ENCODE measurements at regions of chr5 and their contacts with region 1.

Region 1: DNA sequence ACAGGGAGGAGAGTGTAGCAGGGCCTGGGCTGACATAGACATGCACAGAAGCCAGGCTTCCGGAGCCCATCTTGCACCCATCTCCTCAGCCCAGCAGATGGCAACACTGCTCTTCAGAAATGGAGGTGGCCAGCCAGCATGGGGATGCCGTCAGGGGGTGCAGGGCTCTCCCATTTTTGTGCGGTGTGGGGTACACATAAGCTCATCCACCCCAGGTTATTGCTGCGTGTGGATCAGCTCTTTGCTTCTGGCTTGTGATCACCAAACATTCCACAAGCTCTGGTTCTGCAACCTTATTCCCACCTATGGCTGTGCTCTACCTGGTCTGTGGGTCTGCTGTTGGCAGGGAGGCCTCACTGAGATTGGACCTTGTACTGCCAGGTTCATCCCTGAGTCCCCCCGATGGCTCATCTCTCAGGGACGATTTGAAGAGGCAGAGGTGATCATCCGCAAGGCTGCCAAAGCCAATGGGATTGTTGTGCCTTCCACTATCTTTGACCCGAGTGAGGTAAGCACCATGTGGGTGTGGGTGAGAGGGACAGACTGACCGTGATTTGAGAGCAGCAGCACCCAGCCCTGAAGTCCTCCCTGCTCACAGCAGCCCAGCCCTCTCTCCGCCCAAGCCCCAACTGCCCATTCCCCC is 17.3 kb downstream of the SLC22A5 start:
- DNase-seq: peak; percentile 44 to 62
- H3K4me3 ChIP-seq: no peak overlapping the region
- H3K27ac ChIP-seq: peak overlapping the region; percentile 97
- H3K4me1 ChIP-seq: peaks cover 52% of the 10 kb centered on the region
- H3K27me3 ChIP-seq: no peaks in the 10 kb centered on the region
- CTCF ChIP-seq: peak; percentile 81

Region 2: DNA sequence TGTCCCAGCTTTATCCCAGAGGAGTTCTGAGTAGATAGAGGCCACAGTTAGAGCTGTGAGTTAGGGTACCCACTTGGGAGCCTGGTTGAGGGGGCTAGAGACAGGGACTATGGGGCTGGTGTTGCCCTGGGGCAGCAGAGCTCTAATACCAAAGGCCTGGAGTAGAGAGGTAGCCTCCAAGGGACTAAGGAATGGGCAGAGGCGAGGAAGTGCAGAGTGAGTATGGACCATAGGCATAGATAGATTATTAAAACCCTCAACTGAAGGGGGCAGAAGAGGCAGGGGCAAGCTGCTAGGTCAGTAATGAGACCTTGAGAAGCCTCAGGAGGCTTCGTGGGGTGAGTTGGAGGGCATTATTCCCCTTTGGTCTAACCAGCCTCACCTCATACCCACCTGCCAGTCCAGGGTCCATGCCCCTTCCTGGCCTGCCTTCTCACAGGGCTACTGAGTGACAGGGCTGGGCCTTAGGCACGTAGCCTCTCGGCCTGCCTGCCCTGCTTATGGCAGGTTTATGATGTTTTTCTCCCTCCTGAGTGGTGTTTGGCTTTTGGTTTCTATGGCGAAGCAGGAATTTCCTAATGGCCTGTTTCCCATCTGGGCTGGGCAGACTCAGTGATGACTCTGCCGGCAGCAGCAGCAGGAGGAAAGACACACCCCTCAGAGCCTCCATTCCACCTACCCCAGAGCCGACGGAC is 121.3 kb before region 1 on chr5:
- CTCF ChIA-PET with region 1: no interaction called
- POLR2A ChIA-PET with region 1: no interaction called
- intact Hi-C with region 1: loop called (anchors 5 kb)
- DNase-seq: peak; percentile 87 to 91
- H3K4me3 ChIP-seq: no peak overlapping the region
- H3K27ac ChIP-seq: peak overlapping the region; percentile 58
- H3K4me1 ChIP-seq: peaks cover 47% of the 10 kb centered on the region
- H3K27me3 ChIP-seq: no peaks in the 10 kb centered on the region
- CTCF ChIP-seq: no peak; the same call in 1 of the 2 replicates

Region 3: DNA sequence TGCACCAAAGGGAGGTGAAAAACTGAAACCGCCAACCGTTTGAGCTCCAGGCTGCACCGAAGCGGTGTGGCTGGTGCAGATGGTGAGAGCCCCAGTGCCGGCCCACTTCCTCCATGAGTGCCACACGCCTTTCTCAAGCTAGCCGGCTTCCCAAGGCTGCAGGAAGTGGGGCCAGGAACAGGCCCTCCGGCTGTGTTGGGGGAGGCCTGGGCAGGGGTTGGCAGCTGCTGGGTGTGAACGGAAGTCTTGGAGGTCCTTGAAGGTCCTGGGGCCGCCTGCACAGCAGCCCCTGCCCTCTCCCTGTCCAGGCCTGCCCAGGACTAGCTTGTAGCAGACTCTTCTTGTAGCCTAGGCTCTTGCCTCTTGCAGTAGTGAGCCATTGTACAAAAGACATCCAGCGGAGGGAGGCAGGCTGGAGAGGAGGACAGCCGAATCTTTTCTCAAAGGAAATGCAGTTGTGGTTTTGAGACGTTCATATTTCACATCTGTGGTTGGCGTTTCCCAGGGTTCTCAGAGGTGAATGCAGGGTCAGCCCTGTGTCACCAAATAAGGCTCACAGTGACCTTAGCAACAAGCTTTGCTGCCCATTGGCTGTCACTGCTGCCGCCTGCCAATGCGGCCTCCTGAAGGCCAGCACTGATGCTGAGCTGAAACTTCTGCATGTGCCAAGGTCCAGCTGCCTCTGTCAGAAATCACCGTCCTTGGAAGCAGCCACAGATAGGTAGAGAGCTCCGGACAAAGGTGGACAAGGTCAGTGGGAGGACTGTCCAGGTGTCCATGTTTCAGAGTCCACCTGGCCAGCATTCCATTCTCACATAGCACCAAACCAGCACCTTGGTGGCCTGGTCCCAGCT is 79.9 kb after region 1 on chr5:
- CTCF ChIA-PET with region 1: interaction called, 3 read pairs
- POLR2A ChIA-PET with region 1: interaction called, 3 read pairs
- intact Hi-C with region 1: loop called (anchors 1 kb)
- DNase-seq: peak in 1 of 2 experiments; percentile 59
- H3K4me3 ChIP-seq: no peak overlapping the region
- H3K27ac ChIP-seq: no peak overlapping the region
- H3K4me1 ChIP-seq: peaks cover 29% of the 10 kb centered on the region
- H3K27me3 ChIP-seq: no peaks in the 10 kb centered on the region
- CTCF ChIP-seq: no peak

Region 4: DNA sequence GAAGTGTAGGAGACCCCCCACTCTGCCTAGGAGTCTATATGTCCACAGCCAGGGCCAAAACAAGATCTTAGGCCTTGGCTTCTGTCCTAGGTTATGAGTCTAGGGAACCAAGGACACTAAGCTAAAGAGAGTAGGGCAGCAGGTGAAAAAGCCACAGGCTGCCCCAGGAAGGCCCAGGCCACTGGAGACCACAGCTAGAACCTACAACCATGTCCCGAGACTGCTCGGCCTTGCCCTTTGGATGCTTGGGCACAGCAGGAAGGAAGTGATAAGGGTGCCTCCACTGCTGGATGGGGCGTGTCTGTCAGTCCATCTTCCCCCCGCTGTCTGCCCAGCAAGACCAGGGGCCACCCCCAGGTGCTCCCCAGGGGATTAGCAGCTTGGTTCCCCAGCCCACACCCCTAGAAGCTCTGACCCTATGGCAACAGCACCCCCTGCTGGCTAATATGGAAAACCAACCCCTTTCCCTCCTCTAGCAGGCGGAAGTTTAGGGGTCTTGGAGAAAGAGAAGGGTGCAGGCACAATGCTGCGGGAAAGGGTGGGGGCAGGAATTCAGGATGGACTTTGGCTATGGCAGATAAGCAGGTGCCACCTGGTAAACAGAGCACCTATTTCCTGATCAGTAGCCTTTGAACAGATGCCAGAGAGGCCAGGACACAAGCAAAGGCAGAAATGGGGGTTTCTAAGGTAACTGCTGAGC is 114.3 kb after region 1 on chr5:
- CTCF ChIA-PET with region 1: interaction called, 8 read pairs
- POLR2A ChIA-PET with region 1: interaction called, 25 read pairs
- intact Hi-C with region 1: loop called (anchors 1 kb)
- DNase-seq: peak in 1 of 2 experiments; percentile 45
- H3K4me3 ChIP-seq: no peak overlapping the region
- H3K27ac ChIP-seq: no peak overlapping the region
- H3K4me1 ChIP-seq: peaks cover 46% of the 10 kb centered on the region
- H3K27me3 ChIP-seq: no peaks in the 10 kb centered on the region
- CTCF ChIP-seq: peak; percentile 89

Region 5: GRCh38 chr5:132753135-132753987 is 366.6 kb after region 1 on chr5:
- CTCF ChIA-PET with region 1: no interaction called
- POLR2A ChIA-PET with region 1: no interaction called
- intact Hi-C with region 1: loop called (anchors 5 kb)
- DNase-seq: no peak
- H3K4me3 ChIP-seq: no peak overlapping the region
- H3K27ac ChIP-seq: no peak overlapping the region
- H3K4me1 ChIP-seq: no peaks in the 10 kb centered on the region
- H3K27me3 ChIP-seq: no peaks in the 10 kb centered on the region
- CTCF ChIP-seq: no peak

Region 6: DNA sequence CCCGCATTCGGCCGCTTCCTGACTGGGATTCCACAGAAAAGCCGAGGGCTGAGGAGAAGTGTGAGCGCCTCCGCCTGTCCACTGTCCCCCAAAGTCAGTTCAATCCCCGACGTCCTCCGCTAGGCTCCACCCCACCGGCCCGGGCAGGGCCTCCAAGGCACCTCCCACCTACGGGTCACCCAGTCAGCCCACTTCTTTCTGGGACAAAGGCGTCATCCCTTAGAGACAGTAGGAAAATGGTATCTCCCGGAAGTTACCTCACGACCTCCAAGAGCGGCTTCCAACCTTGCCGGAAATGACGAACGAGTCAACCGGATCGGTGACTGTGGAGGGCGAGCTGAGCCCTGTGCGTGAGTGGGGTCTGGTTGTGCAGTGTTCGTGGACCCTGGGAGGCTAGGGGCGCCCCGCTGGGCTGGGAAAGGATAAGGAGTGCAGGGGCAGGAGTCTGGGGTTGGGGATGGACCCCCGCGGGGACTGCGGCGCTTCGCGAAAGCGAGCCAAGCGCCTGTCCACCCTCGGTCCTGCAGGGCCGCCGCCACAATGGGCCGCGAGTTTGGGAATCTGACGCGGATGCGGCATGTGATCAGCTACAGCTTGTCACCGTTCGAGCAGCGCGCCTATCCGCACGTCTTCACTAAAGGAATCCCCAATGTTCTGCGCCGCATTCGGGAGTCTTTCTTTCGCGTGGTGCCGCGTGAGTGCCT is 479.7 kb after region 1 on chr5 and contains the starts of genes GDF9 and UQCRQ:
- CTCF ChIA-PET with region 1: no interaction called
- POLR2A ChIA-PET with region 1: no interaction called
- intact Hi-C with region 1: loop called (anchors 5 kb)
- DNase-seq: peak; percentile 96 to 97
- H3K4me3 ChIP-seq: peak within 1 kb of the TSS; percentile 76
- H3K27ac ChIP-seq: peak within 1 kb of the TSS; percentile 69
- H3K4me1 ChIP-seq: peaks cover 18% of the 10 kb centered on the region
- H3K27me3 ChIP-seq: no peaks in the 10 kb centered on the region
- CTCF ChIP-seq: peak; percentile 36; the same call in 1 of the 2 replicates
- total RNA-seq, gene GDF9: 0.73 and 1.4 TPM in 2 replicates
- total RNA-seq, gene UQCRQ: 414 and 446 TPM in 2 replicates